GM12878 (cell line): ENCODE measurements at regions of chr6 and their contacts with region 1.

Region 1: GRCh38 chr6:408599-409102 is 17.1 kb downstream of the IRF4 start:
- DNase-seq: no peak
- ATAC-seq: no peak
- H3K4me3 ChIP-seq: no peak overlapping the region
- H3K27ac ChIP-seq: no peak overlapping the region
- H3K4me1 ChIP-seq: no peaks in the 10 kb centered on the region; the same call in 1 of the 2 replicates
- H3K27me3 ChIP-seq: no peaks in the 10 kb centered on the region
- CTCF ChIP-seq: peak; percentile 22 to 28 (median 24); a peak in 3 of 6 replicates
- EP300 ChIP-seq: no peak
- POLR2A ChIP-seq: peak; percentile 89
- RAD21 ChIP-seq: peak; percentile 47

Region 2: GRCh38 chr6:422433-423054 is 13.9 kb after region 1 on chr6:
- CTCF ChIA-PET with region 1: interaction called, 4 read pairs
- POLR2A ChIA-PET with region 1: no interaction called
- RAD21 ChIA-PET with region 1: interaction called, 3 read pairs
- SMC1A ChIA-PET with region 1: interaction called, 11 read pairs
- in situ Hi-C with region 1: no loop called
- intact Hi-C with region 1: no loop called
- DNase-seq: no peak
- ATAC-seq: peak; percentile 98
- H3K4me3 ChIP-seq: no peak overlapping the region
- H3K27ac ChIP-seq: no peak overlapping the region
- H3K4me1 ChIP-seq: peaks cover 5% of the 10 kb centered on the region
- H3K27me3 ChIP-seq: no peaks in the 10 kb centered on the region
- CTCF ChIP-seq: no peak
- EP300 ChIP-seq: 0 out of 4 replicates have a peak, but pooled peaks have one; percentile 17 to 19
- POLR2A ChIP-seq: no peak
- RAD21 ChIP-seq: peak; percentile 23; the same call in 1 of the 2 replicates

Region 3: DNA sequence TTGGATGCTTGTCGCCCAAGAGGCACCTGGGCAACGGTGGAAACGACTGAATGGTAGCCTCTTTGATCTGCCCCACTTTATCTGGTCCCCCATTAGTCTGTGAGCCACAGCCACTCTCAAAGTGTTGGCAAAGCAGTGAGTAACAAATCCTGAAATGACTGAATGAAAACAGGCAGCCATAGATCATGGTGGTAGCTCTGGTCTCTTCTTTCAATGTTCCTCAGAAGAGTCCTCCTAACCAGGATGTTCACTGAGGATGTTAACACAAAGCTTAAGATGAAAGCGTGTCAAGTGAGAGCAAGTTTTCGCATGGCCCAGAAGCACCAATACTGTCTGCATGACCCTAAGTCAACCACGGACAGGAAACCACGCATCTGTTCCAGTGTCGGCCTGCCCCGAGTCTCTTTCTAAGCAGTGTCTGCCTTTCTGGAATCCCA is 90.2 kb after region 1 on chr6:
- CTCF ChIA-PET with region 1: interaction called, 5 read pairs
- POLR2A ChIA-PET with region 1: no interaction called
- RAD21 ChIA-PET with region 1: interaction called, 6 read pairs
- SMC1A ChIA-PET with region 1: interaction called, 5 read pairs
- in situ Hi-C with region 1: no loop called
- intact Hi-C with region 1: loop called (anchors 5 kb)
- DNase-seq: peak; percentile 69
- ATAC-seq: peak; percentile 77
- H3K4me3 ChIP-seq: peak overlapping the region; percentile 31; the same call in 1 of the 2 replicates
- H3K27ac ChIP-seq: peak overlapping the region; percentile 78
- H3K4me1 ChIP-seq: peaks cover 36% of the 10 kb centered on the region
- H3K27me3 ChIP-seq: no peaks in the 10 kb centered on the region
- CTCF ChIP-seq: no peak
- EP300 ChIP-seq: no peak
- POLR2A ChIP-seq: no peak
- RAD21 ChIP-seq: no peak